ENCODE measurements at regions of chr1 and their contacts with region 1.

Region 1: DNA sequence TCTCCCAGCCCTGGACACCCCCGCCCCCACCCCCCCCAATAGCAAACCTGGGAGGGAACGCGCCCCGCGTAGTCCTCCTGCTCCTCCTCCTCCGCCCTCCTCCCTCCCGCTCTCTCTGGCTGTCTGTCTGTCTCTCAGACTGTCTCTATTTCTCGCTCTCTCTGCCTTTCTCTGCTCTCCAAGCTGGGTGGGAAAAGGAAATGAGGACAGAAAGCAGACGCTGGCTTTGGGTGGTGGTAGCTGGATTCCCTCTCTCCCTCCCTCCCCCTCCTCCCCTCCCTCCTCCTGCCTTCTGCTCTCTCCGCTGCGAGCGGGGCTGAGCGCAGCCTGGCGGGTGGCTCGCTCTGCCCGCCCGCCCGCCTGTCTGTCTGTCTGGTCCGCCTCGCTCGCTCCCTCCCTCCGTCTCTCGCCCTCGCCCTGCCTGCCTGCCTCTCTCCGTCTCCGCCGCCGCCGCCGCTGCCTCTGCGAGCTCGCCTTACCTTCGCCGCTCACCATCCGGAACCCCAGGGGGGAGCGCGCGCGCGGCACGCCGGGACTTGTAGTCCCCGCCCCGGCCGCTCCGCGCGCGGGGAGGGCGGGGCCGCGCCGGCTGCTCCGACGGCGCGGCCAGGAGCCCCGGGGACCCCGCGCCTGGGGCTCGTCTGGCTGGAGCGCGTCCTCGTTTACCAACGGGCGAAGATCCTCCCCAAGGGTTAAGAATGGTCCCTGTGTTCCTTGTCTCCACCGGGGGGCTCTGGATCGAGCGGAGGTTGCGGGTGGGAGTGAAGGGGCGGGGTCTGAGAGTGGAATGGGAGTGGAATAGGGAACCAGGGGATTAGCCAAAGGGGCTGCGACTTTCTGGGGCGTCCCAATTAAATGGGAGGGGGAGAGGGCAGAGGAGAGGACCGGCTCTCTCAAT is at the start of gene AHDC1:
- DNase-seq: peak; percentile 98
- H3K4me3 Mint-ChIP-seq: peak within 1 kb of the TSS; percentile 99
- H3K27ac Mint-ChIP-seq: peak within 1 kb of the TSS; percentile 92
- H3K4me1 Mint-ChIP-seq: peaks cover 43% of the 10 kb centered on the region
- H3K27me3 Mint-ChIP-seq: no peaks in the 10 kb centered on the region
- total RNA-seq, gene AHDC1: 33.9 and 34.7 TPM in 2 replicates

Region 2: GRCh38 chr1:27087371-27088220 is 516.3 kb before region 1 on chr1:
- intact Hi-C with region 1: no loop called
- DNase-seq: no peak
- H3K4me3 Mint-ChIP-seq: no peak overlapping the region
- H3K27ac Mint-ChIP-seq: no peak overlapping the region
- H3K4me1 Mint-ChIP-seq: peaks cover 3% of the 10 kb centered on the region
- H3K27me3 Mint-ChIP-seq: peaks cover 2% of the 10 kb centered on the region

Region 3: DNA sequence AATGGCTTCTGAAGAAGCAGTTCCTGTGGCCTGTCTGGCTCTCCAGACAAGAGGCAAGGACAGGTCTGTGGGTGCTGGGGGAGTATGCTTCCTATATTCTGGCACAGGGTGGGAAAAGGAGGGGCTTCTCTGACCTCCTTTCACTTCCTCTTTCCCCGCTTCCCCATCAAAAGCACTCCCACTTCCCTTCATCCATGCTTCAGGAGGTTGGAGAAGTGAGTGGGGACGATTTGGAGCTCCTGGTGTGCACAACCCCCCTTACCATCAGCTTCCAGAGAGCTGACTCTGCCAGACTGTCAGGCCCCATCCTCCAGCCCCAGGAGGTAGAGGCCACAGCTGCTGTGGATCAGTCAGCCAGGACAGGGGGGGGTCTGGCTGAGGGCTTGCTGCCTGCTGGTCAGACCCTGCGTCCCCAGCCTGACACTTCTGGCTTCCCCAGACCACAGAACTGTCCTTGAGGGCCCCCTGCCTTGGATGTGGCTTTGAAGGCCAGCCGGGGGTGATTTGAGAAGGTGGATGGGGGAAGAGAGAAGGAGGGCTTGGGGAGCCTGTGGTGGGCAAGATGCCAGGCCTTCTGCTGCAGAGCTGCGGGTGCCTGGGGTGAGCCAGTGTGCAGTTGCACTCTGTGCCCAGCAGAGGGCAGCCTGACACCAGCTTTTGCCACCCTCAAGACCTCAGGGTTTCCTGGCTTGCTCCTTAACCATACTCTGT is 303.4 kb before region 1 on chr1:
- intact Hi-C with region 1: loop called (anchors 2 kb)
- DNase-seq: peak; percentile 92
- H3K4me3 Mint-ChIP-seq: no peak overlapping the region
- H3K27ac Mint-ChIP-seq: no peak overlapping the region
- H3K4me1 Mint-ChIP-seq: no peaks in the 10 kb centered on the region
- H3K27me3 Mint-ChIP-seq: no peaks in the 10 kb centered on the region

Region 4: DNA sequence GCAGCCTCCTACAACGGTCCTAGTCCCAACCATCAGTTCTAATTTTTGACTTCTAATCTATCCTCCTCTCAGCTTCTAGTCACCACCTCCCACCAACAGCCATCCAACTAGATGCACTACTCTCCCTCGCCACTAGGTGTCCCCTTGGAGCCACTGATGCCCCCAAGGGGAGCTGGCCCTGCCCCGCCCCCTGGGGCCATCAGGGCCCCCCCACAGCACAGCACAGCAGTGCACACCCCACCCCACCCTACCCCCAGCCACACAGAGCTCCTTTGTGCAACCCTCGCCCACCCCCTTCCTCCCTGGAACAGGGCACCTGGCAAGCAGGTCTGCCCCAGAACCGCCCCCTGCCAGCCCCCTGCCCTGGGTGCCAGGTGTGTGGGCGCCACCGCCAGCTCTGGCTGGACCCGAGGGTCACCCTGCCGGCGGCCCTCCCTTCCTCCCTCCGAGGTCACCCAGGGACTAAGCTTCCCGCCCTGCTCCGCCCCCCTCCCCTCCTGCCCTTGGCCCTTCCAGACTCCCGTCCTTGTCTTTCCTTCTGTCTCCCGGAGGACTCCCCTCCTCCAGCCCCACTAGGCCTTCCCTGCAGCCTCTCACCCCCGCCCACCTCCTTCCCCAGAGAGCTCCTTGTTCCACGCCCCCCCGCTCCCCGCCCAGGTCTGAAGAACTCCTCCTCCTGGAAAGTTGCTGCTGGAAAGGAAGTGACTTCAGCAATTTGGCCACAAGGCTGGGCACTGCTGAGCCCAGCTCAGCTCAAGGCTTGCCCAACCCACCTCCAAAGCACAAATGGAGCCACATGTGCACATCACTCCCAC is 46.9 kb before region 1 on chr1:
- intact Hi-C with region 1: loop called (anchors 1 kb)
- DNase-seq: peak; percentile 92
- H3K4me3 Mint-ChIP-seq: peak overlapping the region; percentile 59
- H3K27ac Mint-ChIP-seq: peak overlapping the region; percentile 81
- H3K4me1 Mint-ChIP-seq: peaks cover 47% of the 10 kb centered on the region
- H3K27me3 Mint-ChIP-seq: no peaks in the 10 kb centered on the region

Region 5: GRCh38 chr1:27568300-27569087 is 35.4 kb before region 1 on chr1:
- intact Hi-C with region 1: loop called (anchors 2 kb)
- DNase-seq: peak; percentile 99
- H3K4me3 Mint-ChIP-seq: peak overlapping the region; percentile 76
- H3K27ac Mint-ChIP-seq: peak overlapping the region; percentile 43
- H3K4me1 Mint-ChIP-seq: peaks cover 25% of the 10 kb centered on the region
- H3K27me3 Mint-ChIP-seq: no peaks in the 10 kb centered on the region

Region 6: DNA sequence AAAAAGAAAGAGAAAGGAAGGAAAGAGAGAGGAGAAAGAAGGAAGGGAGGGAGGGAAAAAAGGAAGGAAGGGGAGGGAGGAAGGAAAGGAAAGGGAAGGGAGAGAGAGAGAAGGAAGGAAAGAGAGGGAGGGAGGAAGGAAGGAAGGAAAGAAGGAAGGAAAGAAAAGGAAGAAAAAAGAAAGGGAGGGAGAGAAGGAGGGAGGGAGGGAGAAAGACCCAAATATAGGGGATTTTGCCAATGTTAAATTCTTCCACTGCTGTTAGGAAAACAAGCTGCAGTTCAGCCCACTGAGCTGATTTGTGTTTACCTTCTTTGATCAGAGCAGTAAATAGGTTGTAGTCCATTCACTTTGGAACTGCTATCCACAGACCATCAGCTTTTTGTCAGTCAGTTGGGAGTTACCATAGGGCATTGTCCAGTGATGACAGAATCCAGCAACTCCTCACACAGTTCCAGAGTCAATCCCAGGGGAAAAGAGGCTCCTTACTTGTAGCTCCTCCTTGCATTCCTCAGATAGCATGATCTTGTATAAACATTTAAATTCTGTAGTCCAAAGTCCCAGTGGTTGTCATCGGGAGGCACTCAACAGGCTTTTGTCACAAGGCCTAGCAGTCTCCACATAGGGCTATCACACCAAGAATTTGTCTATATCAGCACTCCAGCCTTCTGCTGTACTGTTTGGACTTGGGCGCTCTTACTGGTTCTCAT is 213.1 kb after region 1 on chr1:
- intact Hi-C with region 1: no loop called
- DNase-seq: no peak
- H3K4me3 Mint-ChIP-seq: no peak overlapping the region
- H3K27ac Mint-ChIP-seq: no peak overlapping the region
- H3K4me1 Mint-ChIP-seq: no peaks in the 10 kb centered on the region
- H3K27me3 Mint-ChIP-seq: no peaks in the 10 kb centered on the region

Region 7: GRCh38 chr1:28078680-28079626 is 475.0 kb after region 1 on chr1:
- intact Hi-C with region 1: no loop called
- DNase-seq: no peak
- H3K4me3 Mint-ChIP-seq: no peak overlapping the region
- H3K27ac Mint-ChIP-seq: no peak overlapping the region
- H3K4me1 Mint-ChIP-seq: peaks cover 16% of the 10 kb centered on the region
- H3K27me3 Mint-ChIP-seq: no peaks in the 10 kb centered on the region